ENCODE measurements at regions of chr19 and their contacts with region 1.

Region 1: DNA sequence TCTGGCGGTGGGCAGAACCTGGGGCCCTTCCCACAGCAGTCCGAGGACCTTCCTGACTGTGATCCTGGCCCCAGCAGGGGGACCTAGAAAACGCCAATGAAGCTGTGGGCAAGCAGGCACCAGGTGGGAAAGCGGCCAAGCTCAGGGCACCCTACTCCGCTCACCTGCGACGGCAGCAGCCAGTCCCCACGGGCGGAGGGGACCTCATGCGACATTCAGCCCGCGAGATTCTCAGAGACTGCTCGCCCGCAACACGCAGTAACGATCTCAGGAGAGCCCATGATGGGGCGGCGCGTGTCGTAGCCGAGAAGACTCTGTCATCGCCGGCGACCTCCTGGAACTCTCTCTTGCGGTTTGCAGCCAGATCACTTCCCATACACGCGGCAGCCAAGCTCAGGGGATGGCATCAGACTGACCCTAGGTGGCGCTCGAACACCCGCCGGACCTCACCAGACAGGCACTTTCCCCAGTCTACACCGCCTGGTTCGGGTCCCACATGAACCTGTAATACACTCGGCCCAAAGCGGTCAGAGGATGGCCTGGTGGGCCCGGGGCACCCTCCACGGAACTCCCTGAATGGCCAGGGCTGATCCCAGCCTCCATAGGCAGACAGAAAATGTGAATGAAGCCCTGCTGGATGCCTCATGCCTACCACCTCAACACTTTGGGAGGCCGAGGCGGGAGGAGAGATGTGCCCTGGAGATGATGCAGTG is 26.5 kb downstream of the MAN2B1 start:
- DNase-seq: peak; percentile 94
- H3K4me3 Mint-ChIP-seq: peak overlapping the region; percentile 68
- H3K27ac Mint-ChIP-seq: peak overlapping the region; percentile 54
- H3K4me1 Mint-ChIP-seq: peaks cover 24% of the 10 kb centered on the region
- H3K27me3 Mint-ChIP-seq: no peaks in the 10 kb centered on the region

Region 2: GRCh38 chr19:12672744-12673143 is 32.7 kb after region 1 on chr19:
- CTCF ChIA-PET with region 1: interaction called, 5 read pairs
- intact Hi-C with region 1: loop called (anchors 1 kb)
- DNase-seq: no peak
- H3K4me3 Mint-ChIP-seq: no peak overlapping the region
- H3K27ac Mint-ChIP-seq: no peak overlapping the region
- H3K4me1 Mint-ChIP-seq: peaks cover 39% of the 10 kb centered on the region
- H3K27me3 Mint-ChIP-seq: no peaks in the 10 kb centered on the region